Ascending aorta (tissue), 2 donors: ENCODE measurements at regions of chr14 and their contacts with region 1.

Region 1: GRCh38 chr14:39266871-39267591 is 33.3 kb downstream of the MIA2 start:
- DNase-seq: peak; percentile 27 to 86
- H3K4me3 ChIP-seq: peak overlapping the region; percentile 93 to 94
- H3K27ac ChIP-seq: peak overlapping the region; percentile 99 to 100
- H3K4me1 ChIP-seq: peaks cover 0 to 21% of the 10 kb centered on the region in 2 donors
- H3K27me3 ChIP-seq: no peaks in the 10 kb centered on the region
- CTCF ChIP-seq: no peak

Region 2: GRCh38 chr14:39232554-39233415 is 34.2 kb before region 1 on chr14:
- intact Hi-C with region 1: loop called (anchors 2 kb)
- DNase-seq: no peak
- H3K4me3 ChIP-seq: no peak overlapping the region
- H3K27ac ChIP-seq: no peak overlapping the region
- H3K4me1 ChIP-seq: no peaks in the 10 kb centered on the region
- H3K27me3 ChIP-seq: no peaks in the 10 kb centered on the region
- CTCF ChIP-seq: no peak

Region 3: DNA sequence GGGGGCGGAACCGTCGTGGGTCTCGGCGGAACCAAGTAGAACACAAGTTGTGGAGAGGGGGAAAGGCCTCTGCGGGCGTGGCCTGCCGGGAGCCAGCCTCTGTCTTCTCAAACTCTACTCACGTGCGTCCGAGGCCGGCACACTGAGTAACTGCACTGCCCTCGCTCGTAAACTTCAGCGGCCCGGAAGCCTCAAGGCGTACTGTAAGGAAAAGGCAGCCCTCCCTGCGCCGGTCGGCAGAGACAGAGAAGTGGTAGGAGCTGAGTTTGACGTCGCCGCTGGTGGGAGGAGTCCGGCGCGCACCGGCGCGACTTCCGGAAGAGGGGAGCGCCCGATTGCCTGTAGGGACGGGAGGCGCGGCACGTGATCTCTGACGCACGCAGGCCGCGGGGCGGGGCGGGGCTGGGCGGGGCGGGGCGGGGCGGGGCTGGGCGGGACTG is 165.2 kb after region 1 on chr14 and contains the start of gene FBXO33:
- intact Hi-C with region 1: loop called (anchors 2 kb)
- DNase-seq: peak; percentile 84 to 98
- H3K4me3 ChIP-seq: peak within 1 kb of the TSS; percentile 95 to 98
- H3K27ac ChIP-seq: peak within 1 kb of the TSS; percentile 93 to 95
- H3K4me1 ChIP-seq: peaks cover 0 to 12% of the 10 kb centered on the region in 2 donors
- H3K27me3 ChIP-seq: no peaks in the 10 kb centered on the region
- CTCF ChIP-seq: no peak
- total RNA-seq, gene FBXO33: 14.5 TPM